Activated T-helper 1 cell treated with anti-CD3 and anti-CD28 coated beads, Interleukin-12 subunit alpha, Interleukin-12 subunit beta, Interleukin-2, Interleukin-4 antibody, amounts not matched to agents 30 ng/mL and 10 ng/mL and 1 ng/mL, durations not matched to agents 14 hours and 24 hours and 36 hours (primary cell): ENCODE measurements at regions of chr4 and their contacts with region 1.

Region 1: GRCh38 chr4:77075869-77076799 is at the start of gene CCNI:
- DNase-seq: peak; percentile 91
- H3K4me3 Mint-ChIP-seq: peak within 1 kb of the TSS; percentile 96
- H3K27ac Mint-ChIP-seq: peak within 1 kb of the TSS; percentile 100
- H3K4me1 Mint-ChIP-seq: peaks cover 42% of the 10 kb centered on the region
- H3K27me3 Mint-ChIP-seq: peaks cover 4% of the 10 kb centered on the region
- total RNA-seq, gene CCNI: 236 and 253 TPM in 2 replicates

Region 2: GRCh38 chr4:76148142-76148865 is 927.8 kb before region 1 on chr4 and contains the start of gene NUP54:
- intact Hi-C with region 1: loop called (anchors 2 kb)
- DNase-seq: peak; percentile 94
- H3K4me3 Mint-ChIP-seq: peak within 1 kb of the TSS; percentile 99
- H3K27ac Mint-ChIP-seq: peak within 1 kb of the TSS; percentile 97
- H3K4me1 Mint-ChIP-seq: peaks cover 35% of the 10 kb centered on the region
- H3K27me3 Mint-ChIP-seq: no peaks in the 10 kb centered on the region
- total RNA-seq, gene NUP54: 70.6 and 75.1 TPM in 2 replicates

Region 3: GRCh38 chr4:76960014-76960413 is 116.1 kb before region 1 on chr4:
- intact Hi-C with region 1: loop called (anchors 1 kb)
- DNase-seq: no peak
- H3K4me3 Mint-ChIP-seq: no peak overlapping the region
- H3K27ac Mint-ChIP-seq: no peak overlapping the region
- H3K4me1 Mint-ChIP-seq: peaks cover 18% of the 10 kb centered on the region
- H3K27me3 Mint-ChIP-seq: peaks cover 50% of the 10 kb centered on the region

Region 4: GRCh38 chr4:77028246-77028645 is 47.9 kb before region 1 on chr4:
- intact Hi-C with region 1: loop called (anchors 1 kb)
- DNase-seq: no peak
- H3K4me3 Mint-ChIP-seq: peak overlapping the region; percentile 35
- H3K27ac Mint-ChIP-seq: peak overlapping the region; percentile 71
- H3K4me1 Mint-ChIP-seq: peaks cover 51% of the 10 kb centered on the region
- H3K27me3 Mint-ChIP-seq: peaks cover 4% of the 10 kb centered on the region

Region 5: DNA sequence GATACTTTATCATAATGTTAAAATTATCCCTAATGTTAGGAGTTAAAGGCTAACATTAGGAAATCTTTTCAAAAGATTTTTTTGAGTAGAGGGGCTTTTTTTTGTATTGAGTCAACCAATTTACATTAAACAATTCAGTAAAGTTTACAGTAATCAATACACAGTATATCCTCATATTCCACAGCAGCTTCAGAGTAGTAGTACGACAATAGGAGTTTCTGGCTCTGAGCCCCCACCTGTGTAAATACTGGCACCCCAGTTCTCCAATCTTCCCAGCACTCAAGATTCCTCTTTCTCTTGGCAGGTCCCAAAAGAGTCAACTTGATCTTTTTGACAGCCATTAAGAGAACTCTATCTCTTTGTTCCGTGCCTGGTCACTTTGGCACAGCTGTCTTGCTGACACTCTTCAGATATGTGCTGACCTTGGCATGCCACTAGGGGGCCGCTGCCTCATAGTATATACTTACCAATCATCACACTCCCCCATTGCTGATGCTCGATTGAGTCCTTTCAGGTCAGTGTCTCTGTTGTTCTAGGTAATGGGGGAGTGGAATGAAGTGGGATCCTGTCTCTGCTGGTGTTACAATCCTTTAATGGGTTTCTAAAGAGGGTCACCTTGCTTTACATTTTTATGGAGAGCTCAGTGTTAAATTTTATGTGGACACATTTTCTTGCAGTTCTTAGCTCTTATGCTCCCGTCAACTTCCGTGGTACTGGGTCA is 19.1 kb after region 1 on chr4:
- intact Hi-C with region 1: loop called (anchors 1 kb)
- DNase-seq: peak; percentile 45
- H3K4me3 Mint-ChIP-seq: no peak overlapping the region
- H3K27ac Mint-ChIP-seq: no peak overlapping the region
- H3K4me1 Mint-ChIP-seq: peaks cover 18% of the 10 kb centered on the region
- H3K27me3 Mint-ChIP-seq: peaks cover 4% of the 10 kb centered on the region

Region 6: DNA sequence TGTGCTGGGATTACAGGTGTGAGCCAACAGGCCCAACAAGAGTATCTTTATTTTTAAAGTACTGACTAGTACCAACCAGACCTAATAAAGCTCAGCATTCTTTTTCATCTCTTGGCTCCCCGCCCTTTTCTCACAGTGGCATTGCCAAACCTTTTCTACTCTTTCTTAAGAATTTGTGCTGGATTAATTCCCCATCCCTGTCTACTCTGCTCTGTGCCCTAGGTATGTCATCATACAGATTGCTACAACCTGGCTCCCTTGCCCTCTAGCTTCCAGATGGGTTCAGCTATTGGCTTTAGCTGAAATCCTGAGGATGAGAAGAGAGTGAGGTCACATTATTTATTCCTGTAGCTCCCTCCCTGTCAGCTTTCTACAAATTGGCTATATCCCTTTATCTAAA is 34.6 kb after region 1 on chr4:
- intact Hi-C with region 1: no loop called
- DNase-seq: no peak
- H3K4me3 Mint-ChIP-seq: no peak overlapping the region
- H3K27ac Mint-ChIP-seq: no peak overlapping the region
- H3K4me1 Mint-ChIP-seq: no peaks in the 10 kb centered on the region
- H3K27me3 Mint-ChIP-seq: peaks cover 9% of the 10 kb centered on the region

Region 7: GRCh38 chr4:77819843-77820648 is 743.9 kb after region 1 on chr4:
- intact Hi-C with region 1: loop called (anchors 2 kb)
- DNase-seq: peak; percentile 92
- H3K4me3 Mint-ChIP-seq: peak overlapping the region; percentile 91
- H3K27ac Mint-ChIP-seq: peak overlapping the region; percentile 99
- H3K4me1 Mint-ChIP-seq: peaks cover 47% of the 10 kb centered on the region
- H3K27me3 Mint-ChIP-seq: peaks cover 5% of the 10 kb centered on the region

Region 8: DNA sequence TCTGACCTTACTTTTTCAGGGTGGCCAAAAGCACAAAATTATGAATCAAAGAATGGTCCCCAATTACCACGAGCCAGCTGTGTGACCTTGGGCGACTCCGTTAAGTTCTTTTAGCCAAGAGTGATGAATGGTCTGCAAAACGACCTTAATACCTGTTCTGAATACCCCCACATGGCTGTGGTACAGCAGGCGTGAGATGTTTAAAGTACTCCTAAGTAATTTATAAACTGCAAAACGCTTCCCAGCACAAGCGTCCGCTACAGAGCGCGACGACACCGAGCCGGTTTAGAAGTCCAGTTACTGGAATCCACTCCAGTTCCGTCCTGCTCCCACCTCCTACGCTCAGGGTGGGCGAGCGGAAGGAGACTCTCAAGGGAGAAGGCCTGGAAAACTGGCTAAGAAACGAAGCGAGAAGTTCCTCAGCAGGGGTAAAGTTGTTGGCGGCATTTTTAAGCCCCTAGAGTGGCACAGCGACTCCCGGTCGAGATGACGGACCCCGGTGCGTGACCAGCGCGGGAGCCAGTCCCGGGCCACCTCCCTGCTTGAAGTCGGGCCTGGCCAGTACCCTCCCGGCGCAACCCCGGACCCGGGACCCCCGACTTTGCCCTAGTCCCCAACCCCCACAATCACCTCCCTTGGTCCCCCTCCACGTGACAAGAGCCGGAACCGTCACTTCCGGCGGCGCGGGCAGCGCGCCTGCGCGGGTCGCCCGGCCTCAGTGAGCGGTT is 1699.3 kb after region 1 on chr4:
- intact Hi-C with region 1: loop called (anchors 2 kb)
- DNase-seq: peak; percentile 86
- H3K4me3 Mint-ChIP-seq: peak overlapping the region; percentile 95
- H3K27ac Mint-ChIP-seq: peak overlapping the region; percentile 96
- H3K4me1 Mint-ChIP-seq: peaks cover 38% of the 10 kb centered on the region
- H3K27me3 Mint-ChIP-seq: no peaks in the 10 kb centered on the region